Activated CD8-positive, alpha-beta T cell treated with anti-CD3 and anti-CD28 coated beads for 36 hours (primary cell): ENCODE measurements at regions of chr9 and their contacts with region 1.

Region 1: DNA sequence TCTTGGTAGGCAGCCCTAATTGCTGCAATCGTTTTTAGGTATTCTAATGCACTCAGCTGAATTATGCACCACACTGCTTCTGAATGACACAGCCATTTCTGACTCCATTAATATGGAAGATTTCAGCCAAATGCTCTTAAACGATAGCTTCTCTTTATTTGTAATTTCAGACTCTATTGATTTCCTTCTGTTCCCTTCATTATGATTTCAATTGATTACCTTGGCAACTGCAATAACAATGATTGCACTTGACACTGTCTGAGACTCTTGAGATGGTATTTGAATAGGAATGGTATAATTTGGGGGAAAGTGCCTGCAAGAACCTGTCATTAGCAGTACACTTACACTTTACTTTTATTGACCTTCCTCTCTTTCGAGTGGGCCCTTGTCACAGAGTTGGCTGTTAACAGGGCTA is 296.1 kb upstream of the DMAC1 start:
- DNase-seq: no peak
- ATAC-seq: no peak
- H3K4me3 Mint-ChIP-seq: no peak overlapping the region
- H3K27ac Mint-ChIP-seq: no peak overlapping the region
- H3K4me1 Mint-ChIP-seq: no peaks in the 10 kb centered on the region
- H3K27me3 Mint-ChIP-seq: no peaks in the 10 kb centered on the region
- CTCF ChIP-seq: no peak

Region 2: DNA sequence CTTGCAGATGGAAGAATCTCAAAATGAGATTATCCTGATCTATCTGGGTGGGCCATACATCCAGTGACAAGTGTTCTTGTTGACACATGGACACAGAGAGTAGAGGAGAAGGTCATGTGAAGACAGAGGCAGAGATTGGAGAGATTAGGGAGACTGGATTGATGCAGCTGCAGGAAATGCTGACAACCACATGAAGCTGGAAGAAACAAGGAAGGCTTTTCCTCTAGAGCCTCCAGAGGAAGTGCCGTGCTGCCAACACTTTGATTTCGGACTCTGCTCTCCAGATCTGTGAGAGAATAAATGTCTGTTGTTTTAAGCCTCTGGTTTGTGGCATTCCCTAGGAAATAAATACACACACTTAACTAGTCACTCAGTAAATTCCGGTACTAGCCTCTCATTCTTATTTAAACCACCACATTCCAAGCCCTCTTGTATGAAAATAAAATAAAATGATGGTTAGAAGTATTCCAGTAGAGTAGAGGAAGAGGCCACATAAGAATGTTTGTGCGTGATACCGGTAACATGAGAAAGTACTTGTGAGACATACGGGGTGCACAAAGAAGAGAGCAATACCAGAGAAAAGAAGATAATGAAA is 185.2 kb before region 1 on chr9:
- CTCF ChIA-PET with region 1: no interaction called
- POLR2A ChIA-PET with region 1: no interaction called
- intact Hi-C with region 1: no loop called
- DNase-seq: no peak
- ATAC-seq: no peak
- H3K4me3 Mint-ChIP-seq: no peak overlapping the region
- H3K27ac Mint-ChIP-seq: no peak overlapping the region
- H3K4me1 Mint-ChIP-seq: peaks cover 4% of the 10 kb centered on the region
- H3K27me3 Mint-ChIP-seq: peaks cover 2% of the 10 kb centered on the region
- CTCF ChIP-seq: no peak

Region 3: GRCh38 chr9:8025551-8025950 is 70.1 kb before region 1 on chr9:
- CTCF ChIA-PET with region 1: no interaction called
- POLR2A ChIA-PET with region 1: no interaction called
- intact Hi-C with region 1: loop called (anchors 10 kb)
- DNase-seq: no peak
- ATAC-seq: no peak
- H3K4me3 Mint-ChIP-seq: no peak overlapping the region
- H3K27ac Mint-ChIP-seq: no peak overlapping the region
- H3K4me1 Mint-ChIP-seq: no peaks in the 10 kb centered on the region
- H3K27me3 Mint-ChIP-seq: no peaks in the 10 kb centered on the region
- CTCF ChIP-seq: no peak

Region 4: GRCh38 chr9:8287501-8287900 is 191.8 kb after region 1 on chr9:
- CTCF ChIA-PET with region 1: no interaction called
- POLR2A ChIA-PET with region 1: no interaction called
- intact Hi-C with region 1: no loop called
- DNase-seq: no peak
- ATAC-seq: no peak
- H3K4me3 Mint-ChIP-seq: no peak overlapping the region
- H3K27ac Mint-ChIP-seq: no peak overlapping the region
- H3K4me1 Mint-ChIP-seq: no peaks in the 10 kb centered on the region
- H3K27me3 Mint-ChIP-seq: no peaks in the 10 kb centered on the region
- CTCF ChIP-seq: no peak